Endothelial cell of umbilical vein (primary cell): ENCODE measurements at regions of chr2 and their contacts with region 1.

Region 1: GRCh38 chr2:31333527-31334183 is 80.9 kb downstream of the XDH start:
- DNase-seq: peak; percentile 60
- H3K4me3 ChIP-seq: no peak overlapping the region
- H3K27ac ChIP-seq: no peak overlapping the region
- H3K4me1 ChIP-seq: no peaks in the 10 kb centered on the region
- H3K27me3 ChIP-seq: peaks cover 0 to 3% of the 10 kb centered on the region in 2 experiments
- CTCF ChIP-seq: peak; percentile 81 to 93
- POLR2A ChIP-seq: no peak

Region 2: DNA sequence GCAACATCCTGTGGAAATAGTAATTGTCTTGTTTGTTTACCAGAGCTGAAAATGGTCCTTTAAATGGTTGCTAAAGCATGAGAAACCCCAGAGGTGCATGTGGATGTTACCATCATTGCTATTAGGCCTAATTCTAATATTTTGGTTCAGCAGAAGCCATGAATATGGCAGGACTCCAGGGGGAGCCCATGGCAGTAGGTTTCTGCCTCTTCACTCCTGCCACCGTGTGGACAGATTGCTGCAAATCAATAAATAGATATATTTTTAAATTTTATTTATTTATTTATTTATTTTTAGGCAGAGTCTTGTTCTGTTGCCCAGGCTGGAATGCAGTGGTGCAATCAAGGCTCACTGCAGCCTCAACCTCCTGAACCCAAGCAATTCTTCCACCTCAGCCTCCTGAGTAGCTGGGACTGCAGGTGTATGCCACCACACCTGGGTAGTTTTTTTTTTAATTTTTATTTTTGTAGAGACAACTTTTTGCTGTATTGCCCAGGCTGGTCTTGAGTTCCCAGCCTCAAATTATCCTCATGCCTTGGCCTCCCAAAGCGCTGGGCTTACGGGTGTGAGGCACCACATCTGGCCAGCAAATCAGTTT is 471.5 kb before region 1 on chr2:
- CTCF ChIA-PET with region 1: interaction called, 6 read pairs
- POLR2A ChIA-PET with region 1: no interaction called
- dilution Hi-C with region 1: no loop called
- intact Hi-C with region 1: loop called (anchors 1 kb)
- DNase-seq: peak; percentile 20
- H3K4me3 ChIP-seq: no peak overlapping the region
- H3K27ac ChIP-seq: no peak overlapping the region
- H3K4me1 ChIP-seq: no peaks in the 10 kb centered on the region
- H3K27me3 ChIP-seq: no peaks in the 10 kb centered on the region
- CTCF ChIP-seq: peak; percentile 39 to 49
- POLR2A ChIP-seq: no peak

Region 3: GRCh38 chr2:31138037-31138962 is 195.4 kb before region 1 on chr2 and contains the start of gene GALNT14:
- CTCF ChIA-PET with region 1: no interaction called
- POLR2A ChIA-PET with region 1: no interaction called
- dilution Hi-C with region 1: no loop called
- intact Hi-C with region 1: loop called (anchors 2 kb)
- DNase-seq: no peak
- H3K4me3 ChIP-seq: no peak within 1 kb of the TSS
- H3K27ac ChIP-seq: no peak within 1 kb of the TSS
- H3K4me1 ChIP-seq: no peaks in the 10 kb centered on the region
- H3K27me3 ChIP-seq: peaks cover 23 to 33% of the 10 kb centered on the region in 2 experiments
- CTCF ChIP-seq: peak in 1 of 2 donors; percentile 36
- POLR2A ChIP-seq: no peak
- total RNA-seq, gene GALNT14: 0.35 and 0.40 TPM in 2 replicates

Region 4: GRCh38 chr2:31170071-31170698 is 163.5 kb before region 1 on chr2:
- CTCF ChIA-PET with region 1: interaction called, 16 read pairs
- POLR2A ChIA-PET with region 1: no interaction called
- dilution Hi-C with region 1: no loop called
- intact Hi-C with region 1: loop called (anchors 1 kb)
- DNase-seq: peak; percentile 47
- H3K4me3 ChIP-seq: no peak overlapping the region
- H3K27ac ChIP-seq: no peak overlapping the region
- H3K4me1 ChIP-seq: no peaks in the 10 kb centered on the region
- H3K27me3 ChIP-seq: no peaks in the 10 kb centered on the region
- CTCF ChIP-seq: peak; percentile 83 to 88
- POLR2A ChIP-seq: no peak

Region 5: GRCh38 chr2:31233741-31234682 is 99.6 kb before region 1 on chr2 and contains the start of gene EHD3:
- CTCF ChIA-PET with region 1: interaction called, 5 read pairs
- POLR2A ChIA-PET with region 1: no interaction called
- dilution Hi-C with region 1: no loop called
- intact Hi-C with region 1: loop called (anchors 1 kb)
- DNase-seq: peak; percentile 82
- H3K4me3 ChIP-seq: peak within 1 kb of the TSS; percentile 3 to 62 (median 40)
- H3K27ac ChIP-seq: no peak within 1 kb of the TSS
- H3K4me1 ChIP-seq: peaks cover 4% of the 10 kb centered on the region
- H3K27me3 ChIP-seq: peaks cover 6 to 12% of the 10 kb centered on the region in 2 experiments
- CTCF ChIP-seq: peak; percentile 43 to 63
- POLR2A ChIP-seq: peak; percentile 28
- total RNA-seq, gene EHD3: 10.7 and 12.1 TPM in 2 replicates

Region 6: DNA sequence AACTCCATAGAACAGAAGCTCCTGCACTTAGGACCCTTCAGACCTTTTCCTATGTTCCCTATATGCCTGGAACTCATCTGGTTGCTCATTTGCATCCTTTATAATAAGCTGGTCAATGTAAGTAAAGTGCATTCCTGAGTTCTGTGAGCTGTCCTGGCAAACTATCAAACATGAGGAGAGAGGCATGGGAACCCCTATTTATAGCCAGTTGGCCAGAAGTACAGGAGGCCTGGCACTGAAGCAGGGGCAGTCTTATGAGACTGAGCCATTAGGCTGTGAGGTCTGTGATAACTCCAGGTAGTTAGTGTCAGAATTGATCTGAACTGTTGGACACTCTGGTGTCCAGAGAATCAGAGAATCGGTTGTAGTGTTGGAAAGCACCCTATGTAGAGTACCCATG is 11.3 kb before region 1 on chr2:
- CTCF ChIA-PET with region 1: interaction called, 10 read pairs
- POLR2A ChIA-PET with region 1: no interaction called
- dilution Hi-C with region 1: no loop called
- intact Hi-C with region 1: no loop called
- DNase-seq: no peak
- H3K4me3 ChIP-seq: no peak overlapping the region
- H3K27ac ChIP-seq: no peak overlapping the region
- H3K4me1 ChIP-seq: no peaks in the 10 kb centered on the region
- H3K27me3 ChIP-seq: peaks cover 0 to 3% of the 10 kb centered on the region in 2 experiments
- CTCF ChIP-seq: no peak
- POLR2A ChIP-seq: no peak